ENCODE measurements at regions of chr19 and their contacts with region 1.

Region 1: GRCh38 chr19:46954993-46955812 is 64.4 kb upstream of the NPAS1 start:
- DNase-seq: peak; percentile 84
- H3K4me3 Mint-ChIP-seq: peak overlapping the region; percentile 81
- H3K27ac Mint-ChIP-seq: peak overlapping the region; percentile 94
- H3K4me1 Mint-ChIP-seq: peaks cover 67% of the 10 kb centered on the region
- H3K27me3 Mint-ChIP-seq: no peaks in the 10 kb centered on the region

Region 2: DNA sequence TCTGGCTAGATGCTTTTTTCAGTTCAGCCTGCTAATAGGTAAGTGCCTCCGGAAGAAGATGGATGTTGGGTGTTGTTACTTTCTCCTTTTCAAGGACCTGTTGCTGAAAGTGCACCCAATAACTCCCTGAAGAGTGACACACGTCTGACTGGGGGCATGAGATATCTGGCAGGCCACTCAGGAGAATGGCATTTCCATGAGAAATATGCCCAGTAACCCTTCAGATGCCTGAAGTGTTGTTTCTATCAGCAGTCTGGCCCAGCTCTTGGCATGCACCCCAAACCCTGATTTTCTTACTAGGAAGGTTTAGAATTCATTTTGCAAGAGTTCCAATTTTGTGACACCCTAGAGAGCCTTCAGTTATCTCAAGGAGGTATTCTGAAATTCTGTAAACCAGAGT is 22.9 kb before region 1 on chr19:
- intact Hi-C with region 1: loop called (anchors 2 kb)
- DNase-seq: no peak
- H3K4me3 Mint-ChIP-seq: no peak overlapping the region
- H3K27ac Mint-ChIP-seq: no peak overlapping the region
- H3K4me1 Mint-ChIP-seq: peaks cover 36% of the 10 kb centered on the region
- H3K27me3 Mint-ChIP-seq: no peaks in the 10 kb centered on the region